Common myeloid progenitor, CD34-positive (primary cell): ENCODE measurements at regions of chr11 and their contacts with region 1.

Region 1: GRCh38 chr11:68584097-68584496 is 100.2 kb upstream of the GAL start:
- DNase-seq: peak; percentile 40 to 72 (median 59)
- H3K4me3 ChIP-seq: no peak overlapping the region
- H3K27ac ChIP-seq: no peak overlapping the region
- H3K4me1 ChIP-seq: no peaks in the 10 kb centered on the region
- H3K27me3 ChIP-seq: no peaks in the 10 kb centered on the region

Region 2: DNA sequence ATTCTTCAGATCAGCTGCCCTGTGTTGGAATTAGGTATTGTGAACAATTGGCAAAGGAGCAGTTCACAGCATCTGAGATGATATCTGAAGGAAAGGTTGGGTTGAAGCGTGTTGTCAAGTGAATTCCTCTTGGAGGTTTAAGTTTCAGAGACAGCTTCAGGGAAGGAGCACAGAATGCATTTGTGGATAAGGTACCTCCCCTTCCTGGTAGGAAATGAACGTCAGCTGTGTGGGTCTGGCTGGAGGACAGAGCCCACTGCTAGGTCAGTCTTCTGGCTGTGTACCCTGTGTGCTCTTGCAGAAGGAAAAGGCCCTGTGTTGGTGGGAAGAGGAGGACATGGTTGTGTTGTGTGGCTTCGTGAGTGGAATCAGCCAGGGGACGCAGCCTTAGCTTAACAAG is 12.1 kb after region 1 on chr11:
- CTCF ChIA-PET with region 1: interaction called, 10 read pairs
- POLR2A ChIA-PET with region 1: no interaction called
- DNase-seq: no peak
- H3K4me3 ChIP-seq: no peak overlapping the region
- H3K27ac ChIP-seq: no peak overlapping the region
- H3K4me1 ChIP-seq: no peaks in the 10 kb centered on the region
- H3K27me3 ChIP-seq: no peaks in the 10 kb centered on the region

Region 3: GRCh38 chr11:68780829-68781228 is 196.7 kb after region 1 on chr11:
- CTCF ChIA-PET with region 1: no interaction called
- POLR2A ChIA-PET with region 1: no interaction called
- DNase-seq: peak; percentile 9 to 39 (median 31)
- H3K4me3 ChIP-seq: no peak overlapping the region
- H3K27ac ChIP-seq: no peak overlapping the region
- H3K4me1 ChIP-seq: no peaks in the 10 kb centered on the region
- H3K27me3 ChIP-seq: no peaks in the 10 kb centered on the region

Region 4: GRCh38 chr11:69257838-69258658 is 674.0 kb after region 1 on chr11:
- CTCF ChIA-PET with region 1: no interaction called
- POLR2A ChIA-PET with region 1: no interaction called
- DNase-seq: no peak
- H3K4me3 ChIP-seq: no peak overlapping the region
- H3K27ac ChIP-seq: no peak overlapping the region
- H3K4me1 ChIP-seq: no peaks in the 10 kb centered on the region
- H3K27me3 ChIP-seq: peaks cover 0 to 19% (median 0%) of the 10 kb centered on the region in 5 experiments